Activated CD4-positive, alpha-beta memory T cell treated with anti-CD3 and anti-CD28 coated beads for 36 hours (primary cell): ENCODE measurements at regions of chr10 and their contacts with region 1.

Region 1: GRCh38 chr10:131546086-131546810 is 234.7 kb upstream of the TCERG1L start:
- DNase-seq: no peak
- H3K4me3 Mint-ChIP-seq: no peak overlapping the region
- H3K27ac Mint-ChIP-seq: no peak overlapping the region
- H3K4me1 Mint-ChIP-seq: no peaks in the 10 kb centered on the region
- H3K27me3 Mint-ChIP-seq: peaks cover 2% of the 10 kb centered on the region

Region 2: DNA sequence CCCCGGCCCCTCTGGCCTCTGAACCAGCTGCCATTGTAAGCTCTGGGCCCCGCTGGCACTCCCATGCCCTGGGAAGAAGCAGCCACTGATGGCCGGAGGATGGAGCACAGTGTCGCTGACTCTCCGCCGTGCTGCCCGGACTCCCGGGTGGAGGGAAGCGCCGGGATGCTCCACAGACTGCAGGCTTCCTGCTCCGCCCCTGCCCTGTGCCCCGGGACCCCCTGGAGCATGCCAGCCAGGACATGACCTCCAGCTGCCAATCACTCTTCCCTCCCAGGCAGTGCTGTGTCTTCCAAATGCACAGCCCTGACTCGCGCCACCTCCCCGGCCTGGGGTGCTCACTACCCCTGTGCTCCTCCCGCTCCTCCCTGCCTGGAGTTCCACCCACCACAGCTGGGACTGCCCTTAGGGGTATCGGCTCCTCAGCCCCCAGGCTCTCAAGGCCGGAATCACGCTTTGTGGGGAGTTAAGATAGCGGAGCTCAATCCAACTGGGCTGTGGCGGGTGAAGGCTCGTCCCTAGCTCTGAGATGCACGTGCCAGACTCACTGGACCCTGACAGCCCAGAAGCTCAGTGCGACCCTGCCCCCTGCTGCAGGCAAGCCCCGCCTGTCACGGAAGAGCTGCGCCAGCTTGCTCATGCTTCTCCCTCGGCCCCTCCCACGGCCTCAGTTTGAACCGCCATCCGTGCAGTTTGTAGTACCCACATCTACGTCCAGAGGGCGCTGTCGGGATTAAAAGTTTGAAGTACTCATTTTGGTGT is 92.5 kb before region 1 on chr10:
- CTCF ChIA-PET with region 1: no interaction called
- POLR2A ChIA-PET with region 1: no interaction called
- intact Hi-C with region 1: no loop called
- DNase-seq: peak; percentile 82
- H3K4me3 Mint-ChIP-seq: no peak overlapping the region
- H3K27ac Mint-ChIP-seq: no peak overlapping the region
- H3K4me1 Mint-ChIP-seq: peaks cover 6% of the 10 kb centered on the region
- H3K27me3 Mint-ChIP-seq: peaks cover 14% of the 10 kb centered on the region

Region 3: GRCh38 chr10:131514454-131514853 is 31.8 kb before region 1 on chr10:
- CTCF ChIA-PET with region 1: no interaction called
- POLR2A ChIA-PET with region 1: no interaction called
- intact Hi-C with region 1: no loop called
- DNase-seq: no peak
- H3K4me3 Mint-ChIP-seq: no peak overlapping the region
- H3K27ac Mint-ChIP-seq: no peak overlapping the region
- H3K4me1 Mint-ChIP-seq: no peaks in the 10 kb centered on the region
- H3K27me3 Mint-ChIP-seq: no peaks in the 10 kb centered on the region

Region 4: GRCh38 chr10:131531265-131532190 is 14.7 kb before region 1 on chr10:
- CTCF ChIA-PET with region 1: interaction called, 10 read pairs
- POLR2A ChIA-PET with region 1: no interaction called
- intact Hi-C with region 1: no loop called
- DNase-seq: no peak
- H3K4me3 Mint-ChIP-seq: no peak overlapping the region
- H3K27ac Mint-ChIP-seq: no peak overlapping the region
- H3K4me1 Mint-ChIP-seq: no peaks in the 10 kb centered on the region
- H3K27me3 Mint-ChIP-seq: no peaks in the 10 kb centered on the region